Activated T-helper 2 cell treated with anti-CD3 and anti-CD28 coated beads, Interferon-gamma antibody, Interleukin-2, Interleukin-4, amounts not matched to agents 10 μg/mL and 5 μg/mL and 100 μg/mL, durations not matched to agents 14 hours and 24 hours and 36 hours (primary cell): ENCODE measurements at regions of chr20 and their contacts with region 1.

Region 1: DNA sequence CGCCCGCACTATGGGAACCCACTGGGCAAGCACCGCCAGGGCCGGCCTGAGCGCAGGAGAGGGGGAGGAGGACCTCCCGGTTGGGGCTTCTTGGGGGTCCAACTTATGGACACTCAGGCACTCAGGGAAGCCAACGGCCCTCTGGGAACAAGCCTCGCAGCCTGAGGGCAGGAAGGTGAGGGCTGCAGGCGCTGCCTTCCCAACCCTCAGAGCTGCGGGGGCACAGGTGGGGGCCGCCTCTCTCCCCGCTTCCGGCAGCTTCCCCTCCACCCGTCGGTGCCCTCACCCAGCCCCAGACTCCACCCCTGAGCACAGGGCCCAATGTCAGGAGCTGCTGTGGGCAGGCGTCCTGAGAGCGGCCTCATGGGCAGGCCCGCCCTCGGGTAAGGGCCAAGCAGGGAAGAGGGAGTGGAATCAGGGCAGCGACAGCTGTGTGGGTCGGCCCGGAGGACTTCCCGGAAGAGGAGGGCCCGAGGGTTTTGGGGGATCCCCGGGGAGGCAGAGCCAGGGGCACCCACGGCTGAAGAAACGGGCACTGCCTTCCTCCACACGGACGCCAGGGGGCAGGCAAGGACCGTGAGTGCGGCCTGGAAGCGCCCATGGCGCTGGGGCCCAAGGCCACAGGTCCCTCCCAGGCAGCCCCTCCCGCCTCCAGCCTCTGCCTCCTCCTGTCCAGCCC is 488 bp upstream of the PTK6 start:
- DNase-seq: peak; percentile 94
- H3K4me3 Mint-ChIP-seq: peak overlapping the region; percentile 69
- H3K27ac Mint-ChIP-seq: peak overlapping the region; percentile 87
- H3K4me1 Mint-ChIP-seq: peaks cover 5% of the 10 kb centered on the region
- H3K27me3 Mint-ChIP-seq: no peaks in the 10 kb centered on the region

Region 2: GRCh38 chr20:63482856-63483695 is 54.6 kb before region 1 on chr20:
- intact Hi-C with region 1: no loop called
- DNase-seq: no peak
- H3K4me3 Mint-ChIP-seq: no peak overlapping the region
- H3K27ac Mint-ChIP-seq: no peak overlapping the region
- H3K4me1 Mint-ChIP-seq: no peaks in the 10 kb centered on the region
- H3K27me3 Mint-ChIP-seq: peaks cover 5% of the 10 kb centered on the region

Region 3: DNA sequence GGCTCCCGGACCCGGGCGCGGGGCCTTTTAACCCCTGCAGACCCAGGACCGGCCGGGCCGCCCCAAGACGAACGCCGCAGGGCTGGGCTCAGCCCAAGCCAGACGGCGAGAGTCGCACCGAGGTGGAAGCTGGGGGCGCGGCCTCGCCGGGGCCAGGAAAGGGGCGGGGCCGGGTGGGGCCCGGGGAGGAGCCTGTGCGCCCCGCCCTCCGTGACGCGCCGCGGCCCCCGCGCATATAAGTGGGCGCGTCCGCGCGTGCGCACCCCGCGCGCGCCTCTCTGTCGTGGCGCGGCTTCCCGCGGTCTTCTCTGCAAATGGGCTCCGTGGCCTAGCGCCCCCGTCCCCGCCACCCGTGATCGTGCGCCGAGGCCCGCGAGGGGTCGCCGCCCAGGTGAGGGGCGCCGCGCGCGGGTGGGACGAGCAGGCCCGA is 17.1 kb before region 1 on chr20 and contains the start of gene PPDPF:
- intact Hi-C with region 1: loop called (anchors 1 kb)
- DNase-seq: peak; percentile 79
- H3K4me3 Mint-ChIP-seq: peak within 1 kb of the TSS; percentile 80
- H3K27ac Mint-ChIP-seq: peak within 1 kb of the TSS; percentile 69
- H3K4me1 Mint-ChIP-seq: peaks cover 6% of the 10 kb centered on the region
- H3K27me3 Mint-ChIP-seq: peaks cover 7% of the 10 kb centered on the region
- total RNA-seq, gene PPDPF: 135 and 143 TPM in 2 replicates

Region 4: GRCh38 chr20:63635431-63636141 is 97.9 kb after region 1 on chr20:
- intact Hi-C with region 1: loop called (anchors 5 kb)
- DNase-seq: peak; percentile 76
- H3K4me3 Mint-ChIP-seq: peak overlapping the region; percentile 45
- H3K27ac Mint-ChIP-seq: peak overlapping the region; percentile 93
- H3K4me1 Mint-ChIP-seq: peaks cover 45% of the 10 kb centered on the region
- H3K27me3 Mint-ChIP-seq: no peaks in the 10 kb centered on the region

Region 5: DNA sequence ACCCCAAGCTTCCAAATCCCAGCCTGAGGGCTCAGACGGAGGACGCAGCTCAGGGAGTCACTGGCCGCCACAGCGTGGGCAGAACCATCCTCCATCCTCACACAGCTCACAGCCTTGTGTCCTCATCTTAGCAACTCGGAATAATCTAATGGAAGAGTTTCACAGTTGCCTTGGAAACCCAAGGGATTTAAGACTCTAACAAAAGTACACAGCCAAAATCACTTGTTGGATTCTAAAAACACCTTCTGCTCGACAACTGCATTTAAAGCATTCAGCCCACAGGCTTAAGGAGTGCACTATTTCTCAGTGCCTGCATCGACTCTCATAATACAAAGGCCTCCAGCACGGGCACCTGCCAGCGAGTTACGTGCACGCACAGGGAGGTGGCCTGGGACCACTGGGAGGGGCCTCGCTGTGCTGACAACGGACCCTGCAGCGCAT is 248.0 kb after region 1 on chr20:
- intact Hi-C with region 1: loop called (anchors 2 kb)
- DNase-seq: no peak
- H3K4me3 Mint-ChIP-seq: no peak overlapping the region
- H3K27ac Mint-ChIP-seq: no peak overlapping the region
- H3K4me1 Mint-ChIP-seq: peaks cover 5% of the 10 kb centered on the region
- H3K27me3 Mint-ChIP-seq: no peaks in the 10 kb centered on the region

Region 6: DNA sequence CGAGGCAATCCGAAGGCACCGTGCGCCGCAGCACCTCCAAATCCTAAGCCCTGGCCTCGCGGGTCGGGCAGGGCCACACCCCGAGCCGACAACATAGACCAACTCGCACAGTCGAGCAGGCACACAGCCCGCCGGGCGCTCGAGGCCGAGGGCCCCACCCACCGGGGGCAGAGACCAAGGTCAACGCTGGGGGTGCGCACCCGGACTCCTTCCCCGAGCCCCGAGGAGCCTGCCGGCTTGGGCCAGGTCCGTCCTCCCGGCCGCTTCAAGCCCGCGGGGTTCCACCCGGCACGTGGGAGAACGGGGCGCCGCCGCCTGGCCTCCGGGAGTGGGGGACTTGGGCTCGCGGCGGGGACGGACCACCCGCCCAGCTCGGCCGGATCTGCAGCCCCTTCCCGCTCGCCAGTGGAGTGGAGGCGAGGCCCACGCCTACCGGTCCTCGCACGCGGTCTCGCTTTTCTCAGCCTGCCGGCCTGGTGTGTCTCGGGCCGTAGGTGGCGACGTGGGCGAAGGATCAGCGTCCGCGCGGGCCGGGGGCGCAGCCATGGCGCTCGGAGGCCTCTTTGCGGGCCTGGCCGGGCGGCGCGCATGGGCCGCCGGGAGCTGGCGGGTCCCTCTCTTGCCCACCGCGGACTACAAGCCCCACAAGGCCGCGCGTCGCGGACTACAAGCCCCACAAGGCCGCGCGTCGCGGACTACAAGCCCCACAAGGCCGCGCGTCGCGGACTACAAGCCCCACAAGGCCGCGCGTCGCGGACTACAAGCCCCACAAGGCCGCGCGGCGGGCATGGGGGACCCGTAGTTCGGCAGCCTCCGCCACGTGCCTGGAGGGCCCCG is 418.4 kb after region 1 on chr20 and contains the start of gene UCKL1:
- intact Hi-C with region 1: loop called (anchors 5 kb)
- DNase-seq: peak; percentile 88
- H3K4me3 Mint-ChIP-seq: peak within 1 kb of the TSS; percentile 84
- H3K27ac Mint-ChIP-seq: peak within 1 kb of the TSS; percentile 83
- H3K4me1 Mint-ChIP-seq: peaks cover 24% of the 10 kb centered on the region
- H3K27me3 Mint-ChIP-seq: no peaks in the 10 kb centered on the region
- total RNA-seq, gene UCKL1: 48.7 and 51.2 TPM in 2 replicates

Region 7: GRCh38 chr20:63973636-63974402 is 436.2 kb after region 1 on chr20:
- intact Hi-C with region 1: loop called (anchors 1 kb)
- DNase-seq: peak; percentile 66
- H3K4me3 Mint-ChIP-seq: no peak overlapping the region
- H3K27ac Mint-ChIP-seq: no peak overlapping the region
- H3K4me1 Mint-ChIP-seq: peaks cover 36% of the 10 kb centered on the region
- H3K27me3 Mint-ChIP-seq: no peaks in the 10 kb centered on the region